ENCODE measurements at regions of chr17 and their contacts with region 1.

Region 1: GRCh38 chr17:51629232-51629631 is 368.9 kb downstream of the UTP18 start:
- DNase-seq: no peak
- ATAC-seq: peak; percentile 78 to 96 (median 91)
- H3K4me3 ChIP-seq: peak overlapping the region; percentile 8
- H3K27ac ChIP-seq: peak overlapping the region; percentile 31
- H3K4me1 ChIP-seq: peaks cover 19% of the 10 kb centered on the region
- H3K27me3 ChIP-seq: no peaks in the 10 kb centered on the region
- CTCF ChIP-seq: no peak

Region 2: GRCh38 chr17:51685287-51685909 is 56.2 kb after region 1 on chr17:
- intact Hi-C with region 1: loop called in 1 of 2 experiments (anchors 10 kb)
- DNase-seq: no peak
- ATAC-seq: no peak
- H3K4me3 ChIP-seq: no peak overlapping the region
- H3K27ac ChIP-seq: no peak overlapping the region
- H3K4me1 ChIP-seq: no peaks in the 10 kb centered on the region
- H3K27me3 ChIP-seq: no peaks in the 10 kb centered on the region
- CTCF ChIP-seq: no peak

Region 3: GRCh38 chr17:51703361-51704341 is 74.4 kb after region 1 on chr17:
- intact Hi-C with region 1: no loop called
- DNase-seq: peak; percentile 59 to 68
- ATAC-seq: peak in 3 of 4 donors; percentile 37 to 56 (median 42)
- H3K4me3 ChIP-seq: no peak overlapping the region
- H3K27ac ChIP-seq: no peak overlapping the region
- H3K4me1 ChIP-seq: no peaks in the 10 kb centered on the region
- H3K27me3 ChIP-seq: no peaks in the 10 kb centered on the region
- CTCF ChIP-seq: no peak

Measured in psoas muscle (tissue), 8 donors.